Activated CD4-positive, alpha-beta T cell treated with anti-CD3 and anti-CD28 coated beads, Interleukin-2, amount 10 ng/mL, durations not matched to agents 7 days and 5 days (primary cell): ENCODE measurements at regions of chr4 and their contacts with region 1.

Region 1: GRCh38 chr4:147236806-147237205 is 244.1 kb upstream of the EDNRA start:
- DNase-seq: no peak
- H3K4me3 Mint-ChIP-seq: no peak overlapping the region
- H3K27ac Mint-ChIP-seq: no peak overlapping the region
- H3K4me1 Mint-ChIP-seq: no peaks in the 10 kb centered on the region
- H3K27me3 Mint-ChIP-seq: no peaks in the 10 kb centered on the region

Region 2: GRCh38 chr4:146762016-146762415 is 474.8 kb before region 1 on chr4:
- CTCF ChIA-PET with region 1: interaction called, 13 read pairs
- POLR2A ChIA-PET with region 1: no interaction called
- DNase-seq: no peak
- H3K4me3 Mint-ChIP-seq: no peak overlapping the region
- H3K27ac Mint-ChIP-seq: no peak overlapping the region
- H3K4me1 Mint-ChIP-seq: no peaks in the 10 kb centered on the region
- H3K27me3 Mint-ChIP-seq: peaks cover 2% of the 10 kb centered on the region